Gastrocnemius medialis (tissue), 4 donors: ENCODE measurements at regions of chr1 and their contacts with region 1.

Region 1: GRCh38 chr1:23344111-23344986 is at the start of gene HNRNPR:
- DNase-seq: peak; percentile 100
- ATAC-seq: peak; percentile 97 to 99
- H3K4me3 ChIP-seq: peak within 1 kb of the TSS; percentile 67 to 86 (median 76)
- H3K27ac ChIP-seq: peak within 1 kb of the TSS; percentile 88 to 96 (median 95)
- H3K4me1 ChIP-seq: peaks cover 37 to 40% of the 10 kb centered on the region in 2 donors
- H3K27me3 ChIP-seq: no peaks in the 10 kb centered on the region
- CTCF ChIP-seq: peak in 2 of 5 experiments; percentile 29 to 37
- POLR2A ChIP-seq: peak; percentile 91 to 93
- total RNA-seq, gene HNRNPR: 36.5 to 56.3 (median 44.5) TPM

Region 2: DNA sequence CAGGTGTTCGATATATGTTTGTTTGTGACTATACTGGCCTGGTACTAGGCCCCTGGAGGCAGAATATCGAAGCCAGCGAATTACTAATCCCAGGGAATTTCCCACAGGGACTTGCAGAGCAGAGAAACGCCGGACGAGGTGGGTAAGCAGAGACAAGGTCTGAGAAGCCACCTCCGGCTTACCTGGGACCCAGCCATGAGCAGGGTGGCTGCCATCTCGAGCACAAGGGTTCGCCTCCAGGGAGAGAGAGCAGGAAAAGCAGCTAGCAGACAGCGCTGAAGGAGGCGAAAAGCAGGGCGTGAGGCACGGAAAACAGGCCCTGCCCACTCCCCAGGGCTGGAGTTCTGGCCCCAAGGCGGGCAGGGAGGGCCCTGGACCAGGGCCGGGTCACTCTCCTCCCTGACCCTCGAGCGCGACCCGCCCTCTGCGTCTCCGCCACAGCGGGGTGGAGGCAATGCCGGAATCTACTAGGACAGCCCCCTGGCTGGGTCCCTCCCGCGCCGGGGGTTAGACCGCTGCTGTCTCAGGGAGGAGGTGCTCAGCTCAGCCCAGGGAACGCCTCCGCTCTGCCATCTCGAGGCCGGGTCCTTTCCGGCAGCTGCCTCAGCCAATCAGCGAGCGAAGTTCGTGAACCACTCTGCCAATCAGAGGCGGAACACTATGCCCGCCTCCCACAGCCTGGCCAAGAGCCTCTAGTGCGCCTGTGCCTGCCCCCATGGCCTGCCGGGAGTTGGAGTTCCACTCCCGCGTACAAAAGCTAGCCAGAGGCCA is 23.6 kb after region 1 on chr1:
- in situ Hi-C with region 1: no loop called
- intact Hi-C with region 1: loop called (anchors 1 kb)
- DNase-seq: peak; percentile 99
- ATAC-seq: peak; percentile 84
- H3K4me3 ChIP-seq: peak overlapping the region; percentile 82 to 99 (median 92)
- H3K27ac ChIP-seq: peak overlapping the region; percentile 99 to 100 (median 100)
- H3K4me1 ChIP-seq: peaks cover 44 to 47% of the 10 kb centered on the region in 2 donors
- H3K27me3 ChIP-seq: no peaks in the 10 kb centered on the region
- CTCF ChIP-seq: no peak
- POLR2A ChIP-seq: peak; percentile 81 to 82

Region 3: DNA sequence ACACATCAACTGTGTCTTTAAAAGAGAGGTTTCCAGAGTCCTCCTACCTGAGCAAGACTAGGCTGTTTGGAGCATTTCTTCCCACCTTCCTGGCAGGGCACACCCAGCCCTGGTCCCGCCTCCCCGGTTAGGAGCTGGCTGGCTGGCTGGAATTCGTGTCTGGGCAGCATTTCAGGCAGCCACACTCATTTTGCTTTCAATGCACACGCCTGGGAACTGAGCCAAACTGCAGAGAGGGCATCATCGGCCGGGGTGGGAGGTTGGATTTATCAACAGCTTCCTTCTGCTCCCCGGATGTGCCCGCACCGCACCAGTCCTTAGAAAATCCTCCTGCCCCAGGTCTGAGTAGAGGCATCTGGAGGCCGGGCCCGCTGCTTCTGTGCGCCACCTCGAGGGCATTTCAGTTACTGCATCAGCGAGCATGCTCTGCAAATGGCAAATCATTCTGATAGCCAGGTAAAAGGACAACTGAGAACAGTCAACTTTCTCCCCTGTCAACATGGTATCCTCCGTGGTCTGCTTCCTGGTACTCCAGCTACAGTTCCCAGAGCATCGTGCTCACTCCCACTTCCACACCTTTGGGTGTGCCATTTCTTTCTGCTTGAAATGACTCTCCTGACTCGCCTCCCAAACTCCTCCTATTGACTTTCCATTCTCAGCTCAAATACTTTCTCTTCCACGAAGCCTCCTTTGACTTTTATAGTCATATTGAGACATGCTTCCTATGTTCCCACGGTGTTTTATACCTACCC is 59.6 kb after region 1 on chr1:
- in situ Hi-C with region 1: loop called in 2 of 4 experiments (anchors 10 kb)
- intact Hi-C with region 1: loop called (anchors 1 kb)
- DNase-seq: peak; percentile 62 to 79
- ATAC-seq: peak; percentile 53 to 54
- H3K4me3 ChIP-seq: peak overlapping the region in 1 of 4 donors; percentile 22
- H3K27ac ChIP-seq: peak overlapping the region; percentile 79 to 85 (median 84)
- H3K4me1 ChIP-seq: peaks cover 27 to 59% of the 10 kb centered on the region in 2 donors
- H3K27me3 ChIP-seq: no peaks in the 10 kb centered on the region
- CTCF ChIP-seq: peak; percentile 76 to 98 (median 91)
- POLR2A ChIP-seq: no peak

Region 4: GRCh38 chr1:23559136-23559984 is 215.0 kb after region 1 on chr1 and contains the start of gene ID3:
- in situ Hi-C with region 1: no loop called
- intact Hi-C with region 1: loop called (anchors 10 kb)
- DNase-seq: peak; percentile 86 to 96
- ATAC-seq: peak; percentile 67 to 71
- H3K4me3 ChIP-seq: peak within 1 kb of the TSS; percentile 54 to 89 (median 70)
- H3K27ac ChIP-seq: peak within 1 kb of the TSS; percentile 88 to 90 (median 89)
- H3K4me1 ChIP-seq: peaks cover 48 to 66% of the 10 kb centered on the region in 2 donors
- H3K27me3 ChIP-seq: no peaks in the 10 kb centered on the region
- CTCF ChIP-seq: no peak
- POLR2A ChIP-seq: peak; percentile 94 to 99
- total RNA-seq, gene ID3: 67.9 to 124 (median 83.0) TPM

Region 5: DNA sequence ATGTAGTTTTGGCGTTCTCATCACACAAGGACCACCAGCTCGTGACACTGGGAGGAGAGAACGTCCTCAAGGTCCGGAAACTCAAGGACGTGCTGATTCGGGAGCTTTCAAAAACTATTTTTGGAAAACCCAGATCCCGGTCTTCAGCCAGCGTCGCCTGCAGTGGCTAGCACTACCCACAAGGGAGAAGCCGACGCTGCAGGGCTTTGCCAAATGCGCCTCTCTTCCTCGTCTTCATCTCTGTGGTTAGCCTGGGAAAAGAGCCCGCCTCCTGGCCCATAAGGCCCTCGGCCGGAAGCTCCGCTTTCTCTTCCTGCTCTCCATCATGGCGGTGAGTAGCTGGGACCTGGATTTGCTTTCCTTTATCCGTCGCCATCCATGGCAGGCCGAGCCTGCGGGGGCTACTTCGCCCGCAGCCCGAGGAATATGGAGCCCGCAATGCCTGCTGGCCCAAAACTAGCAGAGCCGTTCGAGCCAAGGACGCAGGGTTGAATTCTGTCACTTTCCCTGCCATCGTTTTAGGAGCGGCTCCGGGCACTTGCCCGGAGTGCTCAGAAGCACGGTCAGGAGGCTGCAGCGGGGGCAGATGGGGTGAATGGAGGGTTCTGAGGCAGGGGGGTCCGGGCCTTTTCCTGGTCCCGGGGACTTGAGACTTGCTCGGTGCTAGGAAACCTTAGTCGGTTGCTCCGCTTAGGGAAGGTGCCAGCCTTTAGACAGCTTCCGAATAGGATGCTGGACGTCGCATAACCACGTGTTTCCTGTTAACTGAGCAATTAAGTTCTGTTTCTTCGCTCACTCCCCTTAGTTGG is 347.4 kb after region 1 on chr1 and contains the start of gene RPL11:
- in situ Hi-C with region 1: no loop called
- intact Hi-C with region 1: loop called (anchors 1 kb)
- DNase-seq: peak; percentile 94 to 96
- ATAC-seq: peak; percentile 99 to 100
- H3K4me3 ChIP-seq: peak within 1 kb of the TSS; percentile 85 to 99 (median 93)
- H3K27ac ChIP-seq: peak within 1 kb of the TSS; percentile 84 to 93 (median 91)
- H3K4me1 ChIP-seq: peaks cover 45 to 47% of the 10 kb centered on the region in 2 donors
- H3K27me3 ChIP-seq: no peaks in the 10 kb centered on the region
- CTCF ChIP-seq: peak; percentile 80 to 90 (median 90)
- POLR2A ChIP-seq: peak; percentile 83 to 94
- total RNA-seq, gene RPL11: 302 to 593 (median 504) TPM